HepG2 (cell line): ENCODE measurements at regions of chr12 and their contacts with region 1.

Region 1: DNA sequence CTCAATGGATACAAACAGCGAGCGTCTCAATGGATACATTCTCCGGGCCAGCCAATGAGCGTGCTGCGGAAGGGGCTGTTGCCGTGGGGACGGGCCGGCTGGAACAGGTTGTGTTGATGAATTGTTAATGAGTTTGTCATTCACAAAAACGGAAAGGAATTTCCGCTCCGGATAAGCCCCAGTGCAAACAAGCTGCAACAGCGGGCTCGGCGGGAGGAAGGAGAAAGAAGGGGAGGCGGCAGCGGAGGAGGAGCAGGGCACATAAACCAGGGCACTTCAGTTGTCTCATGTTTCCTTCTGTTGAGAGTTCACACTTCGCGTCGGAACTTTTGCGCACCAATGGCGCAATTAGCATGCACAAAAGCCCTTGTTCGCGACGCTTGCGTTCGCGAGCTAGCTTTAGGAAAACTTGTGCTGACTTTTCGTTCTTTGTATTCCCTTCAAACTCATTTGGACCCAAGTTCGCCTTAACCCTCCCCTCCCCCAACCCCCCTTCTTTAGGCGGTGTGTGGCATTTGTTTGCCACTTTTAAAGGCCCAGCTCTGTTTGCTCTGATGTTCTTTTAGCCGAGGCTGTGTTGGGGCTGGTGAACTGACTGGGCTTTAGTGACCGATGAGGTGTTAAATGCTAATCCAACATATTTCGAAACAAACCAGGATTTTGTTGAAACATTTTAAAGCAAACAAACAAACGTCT is at the start of gene DUSP6:
- DNase-seq: peak; percentile 98
- ATAC-seq: peak; percentile 76
- H3K4me3 ChIP-seq: peak within 1 kb of the TSS; percentile 98 to 99 (median 98)
- H3K27ac ChIP-seq: peak within 1 kb of the TSS; percentile 99
- H3K4me1 ChIP-seq: peaks cover 48% of the 10 kb centered on the region
- H3K27me3 ChIP-seq: peaks cover 0 to 9% of the 10 kb centered on the region in 2 experiments; a peak in 1 of 5 replicates
- CTCF ChIP-seq: 0 out of 2 replicates have a peak, but pooled peaks have one; percentile 8
- EP300 ChIP-seq: peak in 1 of 2 experiments; percentile 92; a peak in 2 of 4 replicates
- POLR2A ChIP-seq: peak in 1 of 2 experiments; percentile 52; a peak in 2 of 4 replicates
- RAD21 ChIP-seq: 0 out of 2 replicates have a peak, but pooled peaks have one; percentile 11
- total RNA-seq, gene DUSP6: 37.0 and 40.9 TPM in 2 replicates

Region 2: DNA sequence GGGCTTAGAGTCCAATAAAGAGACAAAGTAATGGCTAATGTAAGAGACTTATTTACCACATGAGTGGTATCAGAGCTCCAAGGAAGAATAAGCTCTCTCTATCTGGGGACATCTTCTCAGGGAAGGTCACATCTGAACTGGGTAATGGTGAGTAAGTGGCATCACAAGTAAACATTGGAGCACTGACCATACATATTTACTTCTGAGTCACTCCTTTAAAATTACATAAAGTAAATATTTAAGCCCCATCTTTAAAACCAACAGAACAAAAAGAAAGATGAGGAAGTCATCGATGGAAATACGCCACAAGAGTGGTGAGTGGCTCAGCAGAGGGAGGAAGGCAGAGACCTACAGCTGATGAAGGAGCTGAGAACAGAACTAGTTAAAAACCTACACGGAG is 160.2 kb before region 1 on chr12:
- CTCF ChIA-PET with region 1: no interaction called
- POLR2A ChIA-PET with region 1: interaction called, 16 read pairs
- in situ Hi-C with region 1: no loop called
- intact Hi-C with region 1: no loop called
- DNase-seq: peak; percentile 10
- ATAC-seq: no peak; the same call in 1 of the 3 replicates
- H3K4me3 ChIP-seq: no peak overlapping the region
- H3K27ac ChIP-seq: no peak overlapping the region
- H3K4me1 ChIP-seq: no peaks in the 10 kb centered on the region; the same call in 1 of the 2 replicates
- H3K27me3 ChIP-seq: no peaks in the 10 kb centered on the region
- CTCF ChIP-seq: no peak
- EP300 ChIP-seq: peak in 1 of 2 experiments; percentile 56; a peak in 1 of 4 replicates
- POLR2A ChIP-seq: no peak
- RAD21 ChIP-seq: no peak

Region 3: DNA sequence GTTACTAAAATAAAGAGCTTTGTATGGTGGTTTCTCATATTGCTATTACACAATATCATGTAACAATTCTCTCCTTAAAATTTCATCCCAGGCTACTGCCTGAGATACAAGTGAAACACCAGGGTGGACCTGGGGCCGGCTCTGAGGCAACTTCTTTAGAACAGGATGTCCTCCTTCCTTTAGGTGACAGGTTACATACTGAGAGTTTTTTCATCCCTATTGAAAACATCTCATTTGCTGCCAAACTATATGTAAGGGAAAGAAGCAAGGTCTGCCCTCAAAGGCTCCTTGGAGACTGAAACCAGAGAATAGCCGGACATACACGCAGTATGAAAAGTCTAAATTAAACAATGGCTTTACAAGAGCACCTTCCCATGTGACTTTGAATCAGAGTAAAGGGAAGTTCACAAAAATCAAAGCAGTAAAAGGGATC is 140.3 kb before region 1 on chr12:
- CTCF ChIA-PET with region 1: no interaction called
- POLR2A ChIA-PET with region 1: no interaction called
- in situ Hi-C with region 1: no loop called
- intact Hi-C with region 1: no loop called
- DNase-seq: no peak
- ATAC-seq: no peak
- H3K4me3 ChIP-seq: no peak overlapping the region
- H3K27ac ChIP-seq: no peak overlapping the region
- H3K4me1 ChIP-seq: peaks cover 24% of the 10 kb centered on the region
- H3K27me3 ChIP-seq: no peaks in the 10 kb centered on the region
- CTCF ChIP-seq: no peak
- EP300 ChIP-seq: no peak
- POLR2A ChIP-seq: no peak
- RAD21 ChIP-seq: no peak

Region 4: DNA sequence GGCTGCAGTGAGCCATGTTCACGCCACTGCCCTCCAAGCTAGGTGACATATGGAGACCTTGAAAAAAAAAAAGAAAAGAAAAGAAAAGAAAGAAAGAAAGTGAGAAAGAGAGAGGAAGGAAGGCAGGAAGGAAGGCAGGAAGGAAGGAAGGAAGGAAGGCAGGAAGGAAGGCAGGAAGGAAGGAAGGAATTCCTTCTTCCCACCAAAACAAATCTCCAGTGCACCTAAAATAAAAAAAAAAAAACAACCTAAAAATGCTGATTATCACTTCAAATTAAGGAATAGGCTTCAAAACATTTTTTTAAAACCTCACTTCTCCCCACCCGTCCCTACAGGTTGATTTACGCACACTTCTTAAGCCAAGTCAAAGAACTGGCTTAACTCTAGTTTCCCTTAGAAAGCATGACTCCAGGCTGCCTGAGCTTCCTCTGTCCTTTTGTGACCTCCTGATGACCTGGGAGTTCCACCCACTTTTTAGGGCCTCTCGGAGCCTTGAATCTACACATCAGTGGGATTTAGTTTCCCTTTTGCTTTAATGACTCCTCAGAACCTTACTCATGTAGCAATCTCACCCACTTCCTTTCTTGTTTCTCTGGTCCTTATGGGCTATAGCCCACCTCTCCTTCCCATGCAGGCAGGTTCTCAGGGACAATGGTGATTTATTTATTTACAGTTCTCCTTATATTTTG is 18.9 kb before region 1 on chr12:
- CTCF ChIA-PET with region 1: no interaction called
- POLR2A ChIA-PET with region 1: interaction called, 19 read pairs
- in situ Hi-C with region 1: no loop called
- intact Hi-C with region 1: no loop called
- DNase-seq: no peak
- ATAC-seq: no peak
- H3K4me3 ChIP-seq: no peak overlapping the region
- H3K27ac ChIP-seq: no peak overlapping the region
- H3K4me1 ChIP-seq: peaks cover 47% of the 10 kb centered on the region
- H3K27me3 ChIP-seq: no peaks in the 10 kb centered on the region
- CTCF ChIP-seq: no peak
- EP300 ChIP-seq: no peak
- POLR2A ChIP-seq: no peak
- RAD21 ChIP-seq: no peak

Region 5: DNA sequence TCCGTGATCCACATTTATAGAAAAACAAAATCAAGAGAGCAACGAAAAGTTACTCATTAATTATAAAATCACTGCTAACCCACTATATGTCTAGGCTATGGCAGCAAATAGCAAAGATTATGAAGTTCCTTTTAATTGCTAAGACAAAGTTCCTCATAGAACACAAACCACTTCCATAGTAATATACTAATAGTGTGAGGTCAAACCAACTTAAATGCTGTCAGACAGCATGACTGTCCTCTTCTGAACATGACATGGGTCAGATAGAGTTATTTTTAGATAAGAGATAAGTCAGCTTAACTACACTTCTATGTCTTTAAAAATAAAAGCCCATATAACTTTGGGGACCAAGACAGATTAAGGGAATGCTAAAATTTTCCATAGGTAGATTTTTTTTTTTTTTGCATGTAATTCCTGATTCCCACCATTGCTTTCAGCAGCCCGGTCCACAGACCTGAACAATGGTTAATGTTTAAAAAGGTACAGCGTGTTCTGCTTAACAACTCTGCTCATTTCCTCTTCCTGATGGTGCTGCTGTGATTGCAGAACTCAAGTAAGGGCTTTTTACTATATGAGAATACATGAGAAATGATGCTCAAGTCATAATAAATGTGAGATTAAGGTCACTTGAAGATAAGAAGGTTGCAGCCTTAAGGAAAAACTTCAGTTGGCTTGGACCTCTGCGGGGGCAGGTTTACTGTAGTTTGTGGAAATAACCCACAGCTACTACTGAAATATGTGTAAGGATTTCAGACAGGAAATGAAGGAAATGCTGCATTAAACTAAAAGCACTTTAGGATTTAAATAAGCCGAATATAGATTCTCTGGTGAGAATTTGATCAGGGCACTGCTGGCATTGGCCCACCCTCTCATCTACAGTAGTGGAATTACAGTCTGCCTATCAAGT is 37.4 kb after region 1 on chr12:
- CTCF ChIA-PET with region 1: no interaction called
- POLR2A ChIA-PET with region 1: interaction called, 430 read pairs
- in situ Hi-C with region 1: loop called (anchors 5 kb)
- intact Hi-C with region 1: loop called (anchors 1 kb)
- DNase-seq: peak; percentile 62
- ATAC-seq: peak; percentile 77
- H3K4me3 ChIP-seq: peak overlapping the region; percentile 13 to 52 (median 27); a peak in 3 of 6 replicates
- H3K27ac ChIP-seq: peak overlapping the region; percentile 75
- H3K4me1 ChIP-seq: peaks cover 82% of the 10 kb centered on the region
- H3K27me3 ChIP-seq: no peaks in the 10 kb centered on the region
- CTCF ChIP-seq: no peak
- EP300 ChIP-seq: peak in 1 of 2 experiments; percentile 32; a peak in 1 of 4 replicates
- POLR2A ChIP-seq: no peak
- RAD21 ChIP-seq: no peak

Region 6: GRCh38 chr12:89461649-89462612 is 109.3 kb after region 1 on chr12:
- CTCF ChIA-PET with region 1: no interaction called
- POLR2A ChIA-PET with region 1: interaction called, 10 read pairs
- in situ Hi-C with region 1: loop called (anchors 5 kb)
- intact Hi-C with region 1: loop called (anchors 1 kb)
- DNase-seq: peak; percentile 44
- ATAC-seq: peak; percentile 80
- H3K4me3 ChIP-seq: no peak overlapping the region
- H3K27ac ChIP-seq: no peak overlapping the region
- H3K4me1 ChIP-seq: no peaks in the 10 kb centered on the region
- H3K27me3 ChIP-seq: no peaks in the 10 kb centered on the region
- CTCF ChIP-seq: peak; percentile 72
- EP300 ChIP-seq: no peak
- POLR2A ChIP-seq: no peak
- RAD21 ChIP-seq: peak; percentile 73

Region 7: DNA sequence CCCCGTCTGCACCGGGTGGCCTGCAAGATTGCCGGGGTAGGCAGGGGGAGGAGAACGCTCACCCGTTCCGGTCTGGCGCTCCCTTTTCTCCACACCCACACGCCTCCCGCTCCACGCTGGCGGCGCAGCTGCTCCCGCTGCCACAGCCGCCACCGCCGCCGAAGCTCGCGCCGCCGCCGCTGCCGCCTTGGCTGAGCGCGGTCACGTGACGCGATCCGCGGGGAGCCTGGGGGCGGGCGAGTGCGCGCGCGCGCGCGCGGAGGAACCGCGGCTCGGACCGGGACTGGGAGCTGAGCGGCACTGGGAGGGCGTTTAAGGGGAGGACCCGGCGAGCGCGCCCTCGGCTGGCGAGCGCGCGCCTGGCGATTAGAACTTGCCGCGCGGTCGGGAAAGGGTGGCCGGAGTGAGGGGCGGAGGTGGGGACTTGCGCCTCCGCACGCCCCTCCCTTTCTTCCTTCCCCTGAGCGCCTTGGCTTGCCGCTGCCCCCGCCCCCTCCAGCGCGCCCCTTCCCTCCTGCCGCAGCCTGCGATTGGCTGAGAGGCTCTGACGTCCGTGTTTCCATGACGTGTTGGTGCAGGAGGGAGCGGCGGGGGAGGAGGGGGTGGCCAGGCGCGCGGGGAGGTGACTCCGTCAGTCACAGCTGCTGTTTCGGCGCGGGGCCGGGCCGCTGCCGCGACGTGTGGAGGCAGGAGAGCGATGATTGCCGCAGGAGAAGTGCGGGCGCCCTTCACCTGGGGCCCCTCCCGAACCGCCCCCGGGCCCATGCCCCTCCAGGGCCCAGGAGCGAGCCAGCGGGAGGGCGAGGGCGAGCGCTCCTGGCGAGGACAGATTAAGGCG is 356.7 kb after region 1 on chr12:
- CTCF ChIA-PET with region 1: no interaction called
- POLR2A ChIA-PET with region 1: interaction called, 17 read pairs
- in situ Hi-C with region 1: no loop called
- intact Hi-C with region 1: loop called (anchors 10 kb)
- DNase-seq: peak; percentile 94
- ATAC-seq: peak; percentile 80
- H3K4me3 ChIP-seq: peak overlapping the region; percentile 84 to 95 (median 95); a peak in 5 of 6 replicates
- H3K27ac ChIP-seq: peak overlapping the region; percentile 99
- H3K4me1 ChIP-seq: peaks cover 31% of the 10 kb centered on the region
- H3K27me3 ChIP-seq: no peaks in the 10 kb centered on the region; a peak in 1 of 5 replicates
- CTCF ChIP-seq: no peak
- EP300 ChIP-seq: no peak
- POLR2A ChIP-seq: peak; percentile 71 to 80
- RAD21 ChIP-seq: no peak; the same call in 1 of the 2 replicates